ACHN (cell line): ENCODE measurements at regions of chr13 and their contacts with region 1.

Region 1: GRCh38 chr13:49292742-49293486 is 45.2 kb downstream of the CDADC1 start:
- DNase-seq: no peak

Region 2: GRCh38 chr13:49443704-49444523 is 151.0 kb after region 1 on chr13 and contains the starts of genes CAB39L and SETDB2:
- in situ Hi-C with region 1: loop called (anchors 25 kb)
- DNase-seq: peak; percentile 97

Region 3: GRCh38 chr13:49652355-49653305 is 359.7 kb after region 1 on chr13:
- in situ Hi-C with region 1: no loop called
- DNase-seq: peak; percentile 29